Endothelial cell of umbilical vein (primary cell): ENCODE measurements at regions of chr1 and their contacts with region 1.

Region 1: GRCh38 chr1:27383039-27383605 is at the start of gene CD164L2:
- DNase-seq: no peak
- H3K4me3 ChIP-seq: no peak within 1 kb of the TSS
- H3K27ac ChIP-seq: no peak within 1 kb of the TSS
- H3K4me1 ChIP-seq: no peaks in the 10 kb centered on the region
- H3K27me3 ChIP-seq: peaks cover 0 to 3% of the 10 kb centered on the region in 2 experiments
- CTCF ChIP-seq: no peak
- POLR2A ChIP-seq: no peak
- total RNA-seq, gene CD164L2: not detected in 2 replicates

Region 2: DNA sequence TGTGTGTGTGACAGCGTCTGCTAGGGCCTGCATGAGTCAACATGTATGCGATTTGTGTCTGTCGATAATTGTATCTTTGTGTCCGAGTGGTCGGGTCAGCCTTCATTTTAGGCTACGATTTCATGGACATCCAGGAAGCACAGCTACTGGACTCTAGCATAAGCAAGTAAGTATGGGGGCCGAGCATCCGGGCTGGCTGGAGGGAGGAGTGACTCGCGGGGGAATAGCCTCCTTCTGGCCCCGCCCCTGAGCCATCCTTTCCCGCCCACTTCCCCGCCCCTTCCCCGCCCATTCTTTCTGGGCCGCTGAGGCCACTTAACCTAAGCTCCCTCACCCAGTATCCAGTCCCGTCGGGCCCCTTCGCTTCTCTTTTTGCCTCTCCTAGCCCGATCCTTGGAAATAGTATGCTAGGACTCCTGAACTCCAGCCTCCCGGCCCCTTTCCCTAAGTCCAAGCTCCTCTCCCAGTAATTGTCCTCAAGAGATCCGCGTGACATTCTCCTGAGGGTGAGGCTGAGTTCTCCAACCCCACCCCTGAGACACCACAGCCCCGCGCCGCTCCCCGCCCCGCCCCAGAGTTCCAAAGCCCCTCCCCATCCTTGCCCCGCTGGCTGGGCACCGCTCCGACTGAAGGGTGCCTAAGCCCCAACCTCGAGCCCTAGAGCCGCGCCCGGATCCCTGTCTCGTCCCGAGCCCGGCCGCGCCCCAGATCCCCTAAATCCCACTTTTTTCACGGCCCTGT is 17.6 kb before region 1 on chr1:
- CTCF ChIA-PET with region 1: interaction called, 17 read pairs
- POLR2A ChIA-PET with region 1: no interaction called
- dilution Hi-C with region 1: no loop called
- intact Hi-C with region 1: no loop called
- DNase-seq: peak; percentile 91
- H3K4me3 ChIP-seq: peak overlapping the region; percentile 62 to 81 (median 79)
- H3K27ac ChIP-seq: peak overlapping the region; percentile 85
- H3K4me1 ChIP-seq: peaks cover 15% of the 10 kb centered on the region
- H3K27me3 ChIP-seq: no peaks in the 10 kb centered on the region
- CTCF ChIP-seq: no peak
- POLR2A ChIP-seq: peak; percentile 41

Region 3: GRCh38 chr1:27598902-27599528 is 215.9 kb after region 1 on chr1:
- CTCF ChIA-PET with region 1: no interaction called
- POLR2A ChIA-PET with region 1: no interaction called
- dilution Hi-C with region 1: no loop called
- intact Hi-C with region 1: no loop called
- DNase-seq: peak; percentile 85
- H3K4me3 ChIP-seq: no peak overlapping the region
- H3K27ac ChIP-seq: no peak overlapping the region
- H3K4me1 ChIP-seq: peaks cover 23% of the 10 kb centered on the region
- H3K27me3 ChIP-seq: no peaks in the 10 kb centered on the region
- CTCF ChIP-seq: no peak
- POLR2A ChIP-seq: no peak